Left colon (tissue), 2 donors: ENCODE measurements at regions of chr4 and their contacts with region 1.

Region 1: GRCh38 chr4:78644744-78645330 is 93.3 kb downstream of the ANXA3 start:
- DNase-seq: peak; percentile 63 to 64
- ATAC-seq: peak; percentile 77

Region 2: DNA sequence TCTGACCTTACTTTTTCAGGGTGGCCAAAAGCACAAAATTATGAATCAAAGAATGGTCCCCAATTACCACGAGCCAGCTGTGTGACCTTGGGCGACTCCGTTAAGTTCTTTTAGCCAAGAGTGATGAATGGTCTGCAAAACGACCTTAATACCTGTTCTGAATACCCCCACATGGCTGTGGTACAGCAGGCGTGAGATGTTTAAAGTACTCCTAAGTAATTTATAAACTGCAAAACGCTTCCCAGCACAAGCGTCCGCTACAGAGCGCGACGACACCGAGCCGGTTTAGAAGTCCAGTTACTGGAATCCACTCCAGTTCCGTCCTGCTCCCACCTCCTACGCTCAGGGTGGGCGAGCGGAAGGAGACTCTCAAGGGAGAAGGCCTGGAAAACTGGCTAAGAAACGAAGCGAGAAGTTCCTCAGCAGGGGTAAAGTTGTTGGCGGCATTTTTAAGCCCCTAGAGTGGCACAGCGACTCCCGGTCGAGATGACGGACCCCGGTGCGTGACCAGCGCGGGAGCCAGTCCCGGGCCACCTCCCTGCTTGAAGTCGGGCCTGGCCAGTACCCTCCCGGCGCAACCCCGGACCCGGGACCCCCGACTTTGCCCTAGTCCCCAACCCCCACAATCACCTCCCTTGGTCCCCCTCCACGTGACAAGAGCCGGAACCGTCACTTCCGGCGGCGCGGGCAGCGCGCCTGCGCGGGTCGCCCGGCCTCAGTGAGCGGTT is 130.6 kb after region 1 on chr4:
- intact Hi-C with region 1: loop called in 1 of 2 experiments (anchors 5 kb)
- DNase-seq: peak; percentile 86 to 88
- ATAC-seq: peak; percentile 83